HCT116 (cell line): ENCODE measurements at regions of chr7 and their contacts with region 1.

Region 1: GRCh38 chr7:73451780-73452398 is 18.3 kb downstream of the FZD9 start:
- DNase-seq: peak; percentile 39
- ATAC-seq: peak; percentile 78
- H3K4me3 ChIP-seq: no peak overlapping the region
- H3K27ac ChIP-seq: no peak overlapping the region
- H3K4me1 ChIP-seq: no peaks in the 10 kb centered on the region
- H3K27me3 ChIP-seq: no peaks in the 10 kb centered on the region
- CTCF ChIP-seq: peak; percentile 83 to 99 (median 95)
- POLR2A ChIP-seq: no peak
- RAD21 ChIP-seq: peak; percentile 92

Region 2: DNA sequence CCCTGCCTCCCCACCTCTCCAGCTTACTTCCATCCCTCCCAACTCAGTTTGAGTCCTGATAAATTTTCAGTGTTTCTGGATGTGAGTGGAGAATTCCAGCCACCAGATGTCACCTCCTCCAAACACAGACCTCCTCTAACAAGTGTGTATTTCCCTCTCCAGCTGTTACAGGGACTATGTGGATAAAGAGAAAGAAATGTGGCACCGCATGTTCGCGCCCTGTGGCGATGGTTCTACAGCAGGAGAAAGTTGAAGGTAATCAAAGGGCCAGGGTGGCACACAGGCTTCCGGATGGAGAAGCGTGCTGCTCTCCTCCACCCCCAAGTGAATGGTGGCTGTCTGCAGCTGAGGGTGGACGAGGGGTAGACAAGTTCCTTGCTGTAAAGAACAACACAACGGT is 109.2 kb before region 1 on chr7:
- CTCF ChIA-PET with region 1: interaction called, 9 read pairs
- POLR2A ChIA-PET with region 1: no interaction called
- RAD21 ChIA-PET with region 1: no interaction called
- intact Hi-C with region 1: loop called (anchors 1 kb)
- DNase-seq: peak; percentile 29
- ATAC-seq: peak; percentile 87
- H3K4me3 ChIP-seq: no peak overlapping the region
- H3K27ac ChIP-seq: no peak overlapping the region
- H3K4me1 ChIP-seq: peaks cover 11 to 15% of the 10 kb centered on the region in 2 experiments
- H3K27me3 ChIP-seq: no peaks in the 10 kb centered on the region
- CTCF ChIP-seq: peak; percentile 51 to 70 (median 59); a peak in 5 of 6 replicates
- POLR2A ChIP-seq: no peak
- RAD21 ChIP-seq: peak; percentile 72